Activated CD4-positive, alpha-beta T cell treated with anti-CD3 and anti-CD28 coated beads, Interleukin-2, amount 10 ng/mL, durations not matched to agents 7 days and 5 days (primary cell): ENCODE measurements at regions of chr7 and their contacts with region 1.

Region 1: DNA sequence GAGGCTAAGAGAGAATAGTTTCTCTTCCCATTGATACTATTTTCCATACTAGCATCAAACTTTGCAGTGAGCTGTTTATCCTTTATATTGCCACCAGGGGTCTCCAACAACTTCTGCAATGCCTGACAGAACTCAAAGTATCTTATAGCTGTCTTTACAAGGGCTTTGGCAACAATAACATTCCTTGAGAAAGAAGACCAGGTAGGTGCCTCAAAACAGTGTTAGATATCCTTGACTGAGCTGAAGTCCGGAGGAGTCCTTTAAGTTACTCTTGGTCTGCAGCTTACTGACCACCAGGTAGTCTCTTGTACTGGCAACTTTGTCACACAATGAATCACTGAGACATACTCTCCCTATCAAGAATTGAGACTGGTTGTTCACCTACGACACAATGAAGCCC is 30.0 kb upstream of the TES start:
- DNase-seq: peak; percentile 51
- H3K4me3 Mint-ChIP-seq: no peak overlapping the region
- H3K27ac Mint-ChIP-seq: no peak overlapping the region
- H3K4me1 Mint-ChIP-seq: peaks cover 9% of the 10 kb centered on the region
- H3K27me3 Mint-ChIP-seq: no peaks in the 10 kb centered on the region

Region 2: DNA sequence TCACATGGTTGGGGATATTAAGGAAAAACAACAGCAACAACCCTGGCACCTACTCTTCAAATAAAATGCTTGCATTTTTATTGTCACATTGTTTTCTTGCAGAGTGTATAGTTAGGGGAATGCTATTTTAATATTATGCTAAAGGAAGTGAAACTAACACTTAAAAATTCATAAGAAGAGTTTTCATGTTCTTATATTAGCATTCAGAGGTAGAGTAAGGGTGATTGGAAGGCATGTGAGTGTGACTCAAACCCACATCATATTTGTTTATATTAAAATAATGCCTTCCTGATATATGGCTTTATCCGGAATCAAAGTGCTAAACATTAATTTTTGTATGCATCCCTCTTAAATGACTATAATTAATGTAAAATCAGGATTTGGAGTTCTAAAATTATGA is 29.7 kb before region 1 on chr7:
- CTCF ChIA-PET with region 1: no interaction called
- POLR2A ChIA-PET with region 1: no interaction called
- DNase-seq: no peak
- H3K4me3 Mint-ChIP-seq: no peak overlapping the region
- H3K27ac Mint-ChIP-seq: no peak overlapping the region
- H3K4me1 Mint-ChIP-seq: peaks cover 26% of the 10 kb centered on the region
- H3K27me3 Mint-ChIP-seq: peaks cover 11% of the 10 kb centered on the region

Region 3: GRCh38 chr7:116236020-116236630 is 55.8 kb after region 1 on chr7:
- CTCF ChIA-PET with region 1: interaction called, 10 read pairs
- POLR2A ChIA-PET with region 1: no interaction called
- DNase-seq: peak; percentile 69
- H3K4me3 Mint-ChIP-seq: no peak overlapping the region
- H3K27ac Mint-ChIP-seq: no peak overlapping the region
- H3K4me1 Mint-ChIP-seq: peaks cover 52% of the 10 kb centered on the region
- H3K27me3 Mint-ChIP-seq: no peaks in the 10 kb centered on the region